H1 (cell line): ENCODE measurements at regions of chr12 and their contacts with region 1.

Region 1: GRCh38 chr12:102095675-102096263 is 24.1 kb downstream of the NUP37 start:
- DNase-seq: no peak
- H3K4me3 ChIP-seq: no peak overlapping the region
- H3K27ac ChIP-seq: no peak overlapping the region
- H3K4me1 ChIP-seq: no peaks in the 10 kb centered on the region
- H3K27me3 ChIP-seq: no peaks in the 10 kb centered on the region
- CTCF ChIP-seq: no peak
- EP300 ChIP-seq: no peak
- POLR2A ChIP-seq: no peak
- RAD21 ChIP-seq: peak; percentile 27 to 30; a peak in 2 of 4 replicates

Region 2: DNA sequence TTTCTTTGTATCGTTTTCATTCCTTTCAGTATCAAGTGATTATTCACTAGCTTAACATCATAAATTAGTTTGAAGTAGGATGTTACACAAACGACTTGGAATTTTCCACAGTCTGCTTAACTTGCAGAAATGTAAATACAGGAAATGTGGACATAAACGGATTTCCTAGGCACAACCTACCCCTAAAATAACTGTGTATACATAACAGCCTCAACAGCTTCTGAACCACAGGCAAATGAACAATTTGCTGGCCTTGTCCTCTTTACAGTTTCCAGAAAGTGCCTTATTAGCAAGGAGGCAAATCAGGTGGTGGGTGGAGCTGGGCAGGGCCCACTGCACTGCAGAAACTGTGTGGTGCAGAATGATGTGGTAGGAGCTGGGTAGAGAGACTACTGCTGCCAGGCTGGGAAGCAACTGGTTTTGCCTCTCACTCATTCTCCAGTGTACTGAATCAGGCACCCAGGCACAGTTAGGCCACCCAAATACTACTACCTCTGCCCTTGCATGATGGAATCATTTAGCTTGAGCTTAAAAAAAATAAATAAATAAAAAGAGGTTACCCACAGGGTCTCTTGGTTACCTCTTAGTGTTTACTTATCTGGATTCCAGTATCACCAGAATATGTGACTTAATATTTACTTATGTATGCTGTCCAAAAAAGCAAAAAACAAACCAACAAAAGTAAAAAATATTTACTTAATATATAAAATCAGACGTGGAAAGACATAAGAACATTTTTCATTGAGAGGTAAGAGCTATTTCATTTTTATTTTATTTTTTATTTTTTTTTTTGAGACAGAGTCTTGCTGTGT is 204.1 kb before region 1 on chr12:
- CTCF ChIA-PET with region 1: no interaction called
- POLR2A ChIA-PET with region 1: no interaction called
- DNase-seq: no peak
- H3K4me3 ChIP-seq: no peak overlapping the region
- H3K27ac ChIP-seq: no peak overlapping the region
- H3K4me1 ChIP-seq: peaks cover 0 to 4% (median 0%) of the 10 kb centered on the region in 4 experiments; a peak in 1 of 7 replicates
- H3K27me3 ChIP-seq: no peaks in the 10 kb centered on the region
- CTCF ChIP-seq: no peak
- EP300 ChIP-seq: no peak
- POLR2A ChIP-seq: no peak
- RAD21 ChIP-seq: no peak

Region 3: GRCh38 chr12:102054345-102054744 is 41.4 kb before region 1 on chr12:
- CTCF ChIA-PET with region 1: no interaction called
- POLR2A ChIA-PET with region 1: no interaction called
- DNase-seq: no peak
- H3K4me3 ChIP-seq: no peak overlapping the region
- H3K27ac ChIP-seq: no peak overlapping the region
- H3K4me1 ChIP-seq: no peaks in the 10 kb centered on the region
- H3K27me3 ChIP-seq: no peaks in the 10 kb centered on the region
- CTCF ChIP-seq: no peak
- EP300 ChIP-seq: no peak
- POLR2A ChIP-seq: no peak
- RAD21 ChIP-seq: no peak

Region 4: DNA sequence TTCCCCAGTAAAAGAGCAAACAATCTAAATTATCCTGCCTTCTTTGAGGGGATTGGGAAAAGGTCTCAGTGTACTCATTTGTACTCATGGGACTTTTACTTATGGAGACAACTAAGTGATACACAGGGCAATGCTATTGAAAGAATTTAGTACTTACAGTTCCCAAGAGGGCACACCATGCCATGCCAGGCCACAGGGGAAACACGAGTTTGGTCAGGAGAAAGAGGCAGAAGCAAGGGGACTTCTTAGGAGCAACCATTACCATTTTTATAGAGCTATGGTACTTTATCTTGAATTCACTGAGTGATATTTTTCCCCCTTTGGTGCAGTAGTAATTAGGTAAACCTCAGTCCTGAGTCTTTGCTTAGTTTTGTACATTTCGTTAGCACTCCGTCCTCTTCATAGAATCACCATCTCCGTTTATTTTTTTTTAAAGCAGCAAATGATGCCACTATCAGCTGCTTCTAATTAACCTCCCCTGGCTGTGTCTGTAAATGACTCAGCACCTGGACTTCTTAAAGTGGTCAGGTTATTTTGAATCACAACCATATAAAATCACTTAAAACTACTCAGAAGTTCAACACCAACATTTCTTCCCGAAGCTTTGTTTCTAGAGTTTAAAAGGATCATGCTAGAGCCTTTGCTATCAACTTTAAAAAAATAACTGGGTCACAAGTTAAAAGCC is 28.1 kb before region 1 on chr12:
- CTCF ChIA-PET with region 1: no interaction called
- POLR2A ChIA-PET with region 1: no interaction called
- DNase-seq: no peak
- H3K4me3 ChIP-seq: no peak overlapping the region
- H3K27ac ChIP-seq: no peak overlapping the region
- H3K4me1 ChIP-seq: no peaks in the 10 kb centered on the region
- H3K27me3 ChIP-seq: no peaks in the 10 kb centered on the region
- CTCF ChIP-seq: no peak
- EP300 ChIP-seq: no peak
- POLR2A ChIP-seq: no peak
- RAD21 ChIP-seq: no peak

Region 5: GRCh38 chr12:102080842-102081241 is 14.9 kb before region 1 on chr12:
- CTCF ChIA-PET with region 1: interaction called, 10 read pairs
- POLR2A ChIA-PET with region 1: no interaction called
- DNase-seq: no peak
- H3K4me3 ChIP-seq: no peak overlapping the region
- H3K27ac ChIP-seq: no peak overlapping the region
- H3K4me1 ChIP-seq: no peaks in the 10 kb centered on the region
- H3K27me3 ChIP-seq: no peaks in the 10 kb centered on the region
- CTCF ChIP-seq: no peak
- EP300 ChIP-seq: no peak
- POLR2A ChIP-seq: no peak
- RAD21 ChIP-seq: no peak

Region 6: DNA sequence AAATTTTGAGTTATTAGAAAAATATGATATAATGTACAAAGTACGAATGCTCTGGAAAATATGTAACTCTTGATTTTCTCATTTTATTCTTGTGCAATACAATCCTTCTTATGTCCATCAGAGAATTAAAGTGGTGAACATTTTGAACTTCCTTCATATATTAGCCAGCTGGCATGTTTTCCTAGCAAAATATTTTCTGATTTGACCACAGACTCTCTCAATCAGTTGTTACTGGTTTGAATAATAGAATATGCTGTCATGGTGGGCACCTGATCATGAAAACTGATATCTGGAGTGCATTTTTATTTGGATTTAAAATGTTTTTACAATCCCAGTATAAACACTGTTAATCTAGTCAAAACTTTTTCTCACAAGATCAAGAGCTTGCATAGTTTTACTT is 48.5 kb after region 1 on chr12:
- CTCF ChIA-PET with region 1: no interaction called
- POLR2A ChIA-PET with region 1: no interaction called
- DNase-seq: no peak
- H3K4me3 ChIP-seq: no peak overlapping the region
- H3K27ac ChIP-seq: no peak overlapping the region
- H3K4me1 ChIP-seq: no peaks in the 10 kb centered on the region
- H3K27me3 ChIP-seq: no peaks in the 10 kb centered on the region
- CTCF ChIP-seq: no peak
- EP300 ChIP-seq: no peak
- POLR2A ChIP-seq: no peak
- RAD21 ChIP-seq: no peak